ENCODE measurements at regions of chr4 and their contacts with region 1.

Region 1: GRCh38 chr4:8428293-8429097 is 12.0 kb downstream of the ACOX3 start:
- DNase-seq: peak; percentile 51 to 100
- H3K4me3 ChIP-seq: peak overlapping the region; percentile 41 to 71 (median 57)
- H3K27ac ChIP-seq: no peak overlapping the region
- H3K4me1 ChIP-seq: peaks cover 0 to 4% (median 0%) of the 10 kb centered on the region in 4 experiments; a peak in 3 of 7 replicates
- H3K27me3 ChIP-seq: peaks cover 0 to 2% (median 0%) of the 10 kb centered on the region in 4 experiments; a peak in 2 of 7 replicates
- CTCF ChIP-seq: peak in 1 of 3 experiments; percentile 44; a peak in 1 of 4 replicates
- EP300 ChIP-seq: peak in 1 of 2 experiments; percentile 44; a peak in 1 of 3 replicates
- POLR2A ChIP-seq: peak in 1 of 2 experiments; percentile 69; a peak in 2 of 3 replicates
- RAD21 ChIP-seq: peak in 1 of 2 experiments; percentile 14; a peak in 2 of 4 replicates

Region 2: GRCh38 chr4:8391972-8392371 is 36.5 kb before region 1 on chr4:
- CTCF ChIA-PET with region 1: no interaction called
- POLR2A ChIA-PET with region 1: no interaction called
- DNase-seq: no peak
- H3K4me3 ChIP-seq: no peak overlapping the region
- H3K27ac ChIP-seq: no peak overlapping the region
- H3K4me1 ChIP-seq: peaks cover 0 to 2% (median 1%) of the 10 kb centered on the region in 4 experiments; a peak in 6 of 7 replicates
- H3K27me3 ChIP-seq: no peaks in the 10 kb centered on the region
- CTCF ChIP-seq: no peak
- EP300 ChIP-seq: no peak
- POLR2A ChIP-seq: no peak
- RAD21 ChIP-seq: no peak

Region 3: DNA sequence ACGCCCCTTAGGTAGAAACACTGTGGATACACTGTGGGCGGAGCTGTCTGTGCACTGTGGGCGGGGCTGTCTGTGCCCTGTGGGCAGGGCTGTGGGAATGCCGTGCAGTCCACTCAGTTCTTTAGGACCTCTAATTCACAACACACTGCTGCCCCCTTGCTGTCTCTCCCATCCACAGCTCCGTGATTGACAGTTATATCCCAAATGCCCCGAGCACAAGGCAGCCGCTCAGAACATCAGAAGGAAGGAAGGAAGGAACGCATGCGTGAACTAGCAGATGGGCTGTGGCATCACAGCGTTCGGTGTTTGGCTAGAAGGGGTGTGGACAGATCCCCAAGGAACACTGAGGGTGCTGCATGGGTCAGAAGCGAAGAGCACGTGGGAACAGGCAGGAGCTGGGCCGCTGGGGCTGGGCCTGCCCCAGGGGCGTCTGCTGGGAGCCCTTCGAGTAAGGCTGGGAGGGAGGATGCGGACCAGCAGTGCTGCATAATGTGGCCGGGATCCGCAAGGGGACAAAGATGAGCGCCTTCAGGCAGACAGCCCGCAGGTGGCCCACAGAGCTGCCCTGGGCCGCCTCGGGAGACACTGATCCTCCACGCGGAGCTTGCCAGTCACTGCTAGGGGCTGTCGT is 17.7 kb before region 1 on chr4:
- CTCF ChIA-PET with region 1: interaction called, 18 read pairs
- POLR2A ChIA-PET with region 1: interaction called, 5 read pairs
- DNase-seq: peak; percentile 53 to 85
- H3K4me3 ChIP-seq: no peak overlapping the region
- H3K27ac ChIP-seq: no peak overlapping the region
- H3K4me1 ChIP-seq: peaks cover 0 to 5% (median 4%) of the 10 kb centered on the region in 4 experiments; a peak in 6 of 7 replicates
- H3K27me3 ChIP-seq: no peaks in the 10 kb centered on the region
- CTCF ChIP-seq: peak in 2 of 3 experiments; percentile 62 to 73; a peak in 3 of 4 replicates
- EP300 ChIP-seq: no peak
- POLR2A ChIP-seq: no peak
- RAD21 ChIP-seq: peak; percentile 64 to 74

Region 4: DNA sequence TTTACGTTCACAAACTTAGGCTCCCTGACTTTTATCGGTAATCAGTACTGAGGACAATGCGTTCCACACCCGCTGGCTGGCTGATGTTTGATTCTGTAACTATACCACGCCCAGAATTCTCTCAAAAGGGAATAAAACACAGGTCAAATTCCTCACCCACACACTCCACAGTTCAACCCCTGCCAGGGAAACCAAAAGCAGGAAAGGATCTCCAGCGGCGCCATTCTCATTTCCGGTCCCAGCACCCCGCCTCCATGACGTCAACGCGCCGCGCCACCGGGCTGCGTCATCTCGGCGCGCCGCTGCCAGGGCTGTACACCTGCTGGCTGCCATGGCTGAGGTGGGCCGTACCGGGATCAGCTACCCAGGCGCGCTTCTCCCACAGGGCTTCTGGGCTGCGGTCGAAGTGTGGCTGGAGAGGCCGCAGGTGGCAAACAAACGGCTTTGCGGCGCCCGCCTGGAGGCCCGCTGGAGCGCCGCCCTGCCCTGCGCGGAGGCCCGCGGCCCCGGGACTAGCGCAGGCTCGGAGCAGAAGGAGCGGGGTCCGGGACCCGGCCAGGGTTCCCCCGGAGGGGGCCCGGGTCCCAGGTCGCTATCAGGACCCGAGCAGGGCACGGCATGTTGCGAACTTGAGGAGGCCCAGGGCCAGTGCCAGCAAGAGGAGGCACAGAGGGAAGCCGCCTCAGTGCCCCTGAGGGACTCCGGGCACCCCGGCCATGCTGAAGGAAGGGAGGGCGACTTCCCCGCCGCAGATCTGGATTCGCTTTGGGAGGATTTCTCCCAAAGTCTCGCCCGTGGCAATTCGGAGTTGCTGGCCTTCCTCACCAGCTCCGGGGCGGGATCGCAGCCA is 12.2 kb after region 1 on chr4 and contains the starts of genes ACOX3 and TRMT44:
- CTCF ChIA-PET with region 1: interaction called, 10 read pairs
- POLR2A ChIA-PET with region 1: interaction called, 11 read pairs
- DNase-seq: peak; percentile 57 to 100
- H3K4me3 ChIP-seq: peak within 1 kb of the TSS; percentile 71 to 92 (median 90)
- H3K27ac ChIP-seq: peak within 1 kb of the TSS; percentile 67
- H3K4me1 ChIP-seq: peaks cover 3 to 21% (median 4%) of the 10 kb centered on the region in 4 experiments; a peak in 6 of 7 replicates
- H3K27me3 ChIP-seq: no peaks in the 10 kb centered on the region
- CTCF ChIP-seq: no peak
- EP300 ChIP-seq: peak in 1 of 2 experiments; percentile 86; a peak in 1 of 3 replicates
- POLR2A ChIP-seq: peak; percentile 37 to 78
- RAD21 ChIP-seq: no peak; a peak in 1 of 4 replicates
- total RNA-seq, gene ACOX3: 9.9 and 10.2 TPM in 2 replicates
- total RNA-seq, gene TRMT44: 20.1 and 23.9 TPM in 2 replicates